ENCODE measurements at regions of chr5 and their contacts with region 1.

Region 1: GRCh38 chr5:131796793-131797693 is at the start of gene FNIP1:
- DNase-seq: peak; percentile 98 to 100 (median 99)
- ATAC-seq: peak; percentile 94 to 98 (median 96)
- H3K4me3 ChIP-seq: peak within 1 kb of the TSS; percentile 72 to 99 (median 86)
- H3K27ac ChIP-seq: peak within 1 kb of the TSS; percentile 96 to 100 (median 99)
- H3K4me1 ChIP-seq: peaks cover 0 to 17% (median 0%) of the 10 kb centered on the region in 3 donors
- H3K27me3 ChIP-seq: no peaks in the 10 kb centered on the region
- CTCF ChIP-seq: no peak
- total RNA-seq, gene FNIP1: 11.1 to 20.9 (median 13.2) TPM

Region 2: GRCh38 chr5:131589510-131590348 is 207.3 kb before region 1 on chr5:
- intact Hi-C with region 1: no loop called
- DNase-seq: peak in 1 of 6 donors; percentile 22
- ATAC-seq: peak; percentile 74 to 91 (median 86)
- H3K4me3 ChIP-seq: no peak overlapping the region
- H3K27ac ChIP-seq: no peak overlapping the region
- H3K4me1 ChIP-seq: no peaks in the 10 kb centered on the region
- H3K27me3 ChIP-seq: no peaks in the 10 kb centered on the region
- CTCF ChIP-seq: peak; percentile 32 to 69 (median 66)

Region 3: DNA sequence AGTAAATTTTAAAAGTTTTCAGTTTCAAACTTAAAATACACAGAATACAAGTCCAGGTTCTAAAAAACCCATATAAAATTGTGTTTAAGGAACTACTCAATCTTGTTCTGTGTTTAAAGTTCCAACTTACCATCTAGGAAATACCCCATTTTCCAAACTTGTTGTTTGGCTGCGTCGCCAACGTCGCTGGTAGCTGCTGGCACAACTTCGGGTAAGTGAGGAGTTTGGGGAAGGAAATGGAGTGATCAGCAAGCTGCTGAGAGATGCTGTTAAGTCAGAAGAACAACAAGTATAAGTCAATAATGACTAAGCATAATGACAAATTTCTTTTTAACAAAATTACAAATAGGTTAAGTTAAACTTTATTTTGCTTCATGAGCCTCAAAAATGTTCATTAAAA is 90.8 kb before region 1 on chr5:
- intact Hi-C with region 1: no loop called
- DNase-seq: no peak
- ATAC-seq: no peak
- H3K4me3 ChIP-seq: no peak overlapping the region
- H3K27ac ChIP-seq: no peak overlapping the region
- H3K4me1 ChIP-seq: no peaks in the 10 kb centered on the region
- H3K27me3 ChIP-seq: no peaks in the 10 kb centered on the region
- CTCF ChIP-seq: no peak

Region 4: GRCh38 chr5:131999441-132000240 is 202.6 kb after region 1 on chr5:
- intact Hi-C with region 1: loop called in 1 of 3 experiments (anchors 10 kb)
- DNase-seq: peak in 2 of 6 donors; percentile 41 to 53
- ATAC-seq: no peak
- H3K4me3 ChIP-seq: no peak overlapping the region
- H3K27ac ChIP-seq: no peak overlapping the region
- H3K4me1 ChIP-seq: peaks cover 9 to 29% (median 13%) of the 10 kb centered on the region in 3 donors
- H3K27me3 ChIP-seq: no peaks in the 10 kb centered on the region
- CTCF ChIP-seq: no peak

Region 5: GRCh38 chr5:132009706-132010405 is 212.8 kb after region 1 on chr5:
- intact Hi-C with region 1: no loop called
- DNase-seq: peak in 3 of 6 donors; percentile 8 to 28 (median 27)
- ATAC-seq: no peak
- H3K4me3 ChIP-seq: no peak overlapping the region
- H3K27ac ChIP-seq: no peak overlapping the region
- H3K4me1 ChIP-seq: no peaks in the 10 kb centered on the region
- H3K27me3 ChIP-seq: no peaks in the 10 kb centered on the region
- CTCF ChIP-seq: no peak

Measured in pancreas (tissue), 10 donors.